ENCODE measurements at regions of chr17 and their contacts with region 1.

Region 1: GRCh38 chr17:4310349-4311060 is 46.7 kb upstream of the ANKFY1 start:
- DNase-seq: no peak
- ATAC-seq: no peak
- H3K4me3 Mint-ChIP-seq: no peak overlapping the region
- H3K27ac Mint-ChIP-seq: no peak overlapping the region
- H3K4me1 Mint-ChIP-seq: peaks cover 63% of the 10 kb centered on the region
- H3K27me3 Mint-ChIP-seq: no peaks in the 10 kb centered on the region
- CTCF ChIP-seq: no peak

Region 2: DNA sequence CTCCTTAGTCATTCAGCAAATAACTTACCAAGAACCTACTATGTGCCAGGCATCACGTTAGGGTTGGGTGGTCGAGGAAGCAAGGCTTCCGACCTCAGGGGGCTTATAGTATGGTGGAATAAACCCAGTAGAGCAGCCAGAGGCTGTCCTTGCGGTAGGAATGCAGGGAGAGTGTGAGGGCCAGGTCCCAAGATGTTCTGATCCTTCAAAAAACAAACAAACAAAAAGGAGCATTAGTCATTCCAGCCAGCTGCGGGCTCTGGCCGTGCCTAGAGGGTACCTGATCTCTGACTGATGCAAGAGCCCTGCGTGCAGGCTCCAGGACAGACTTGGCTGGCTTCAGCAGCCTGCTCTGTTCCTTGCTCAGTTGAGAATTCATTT is 149.3 kb before region 1 on chr17:
- CTCF ChIA-PET with region 1: no interaction called
- POLR2A ChIA-PET with region 1: no interaction called
- intact Hi-C with region 1: no loop called
- DNase-seq: no peak
- ATAC-seq: no peak
- H3K4me3 Mint-ChIP-seq: no peak overlapping the region
- H3K27ac Mint-ChIP-seq: no peak overlapping the region
- H3K4me1 Mint-ChIP-seq: peaks cover 11% of the 10 kb centered on the region
- H3K27me3 Mint-ChIP-seq: no peaks in the 10 kb centered on the region
- CTCF ChIP-seq: no peak

Region 3: GRCh38 chr17:4354862-4355514 is 44.5 kb after region 1 on chr17:
- CTCF ChIA-PET with region 1: interaction called, 3 read pairs
- POLR2A ChIA-PET with region 1: no interaction called
- intact Hi-C with region 1: loop called (anchors 5 kb)
- DNase-seq: no peak
- ATAC-seq: no peak
- H3K4me3 Mint-ChIP-seq: no peak overlapping the region
- H3K27ac Mint-ChIP-seq: no peak overlapping the region
- H3K4me1 Mint-ChIP-seq: peaks cover 64% of the 10 kb centered on the region
- H3K27me3 Mint-ChIP-seq: no peaks in the 10 kb centered on the region
- CTCF ChIP-seq: no peak

Region 4: DNA sequence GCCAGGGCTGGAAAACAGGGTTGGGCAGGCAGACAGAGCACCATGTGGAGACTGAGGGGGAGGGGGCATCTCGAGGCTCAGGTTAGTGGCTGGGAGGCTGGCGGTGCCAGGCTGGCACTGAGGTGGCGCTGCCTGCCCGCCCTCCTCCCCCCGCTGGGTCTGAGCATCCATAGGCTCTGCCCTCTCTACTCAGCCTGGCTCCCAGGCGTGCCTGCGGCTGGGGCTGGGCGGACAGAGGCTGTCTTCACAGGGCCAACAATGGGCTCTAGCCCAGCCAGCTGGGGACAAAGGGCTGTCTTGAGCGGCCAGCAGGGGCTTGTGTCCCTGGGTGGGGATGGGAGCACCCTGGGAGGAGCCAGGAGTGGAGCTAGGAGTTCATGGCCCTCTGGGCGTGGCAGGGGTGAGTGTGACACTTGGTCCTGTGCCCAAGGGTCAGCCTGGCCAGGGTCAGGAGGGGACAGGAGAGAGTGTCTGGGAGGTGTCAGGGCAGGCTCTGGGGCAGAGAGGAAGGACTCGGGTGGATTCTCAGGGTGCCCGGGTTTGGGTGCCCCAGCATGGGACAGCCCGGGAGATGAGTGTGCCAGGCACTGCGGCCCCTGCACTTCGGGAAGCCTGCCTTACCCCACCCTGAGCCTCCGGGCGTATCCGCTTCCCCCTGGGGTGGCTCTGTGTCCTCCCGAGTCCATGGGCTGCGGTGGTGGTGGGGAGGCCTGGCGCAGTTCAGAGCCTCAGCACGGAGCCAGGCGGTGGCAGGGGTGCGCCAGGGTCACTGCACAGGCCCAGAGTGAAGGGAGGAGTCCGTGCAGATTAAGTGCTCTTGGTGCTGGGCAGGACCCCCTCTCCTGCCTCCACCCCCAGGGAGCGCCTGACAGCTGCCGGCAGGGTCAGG is 223.8 kb after region 1 on chr17:
- CTCF ChIA-PET with region 1: no interaction called
- POLR2A ChIA-PET with region 1: no interaction called
- intact Hi-C with region 1: no loop called
- DNase-seq: no peak
- ATAC-seq: no peak
- H3K4me3 Mint-ChIP-seq: no peak overlapping the region
- H3K27ac Mint-ChIP-seq: no peak overlapping the region
- H3K4me1 Mint-ChIP-seq: peaks cover 1% of the 10 kb centered on the region
- H3K27me3 Mint-ChIP-seq: peaks cover 4% of the 10 kb centered on the region
- CTCF ChIP-seq: no peak